ENCODE measurements at regions of chr9 and their contacts with region 1.

Region 1: GRCh38 chr9:21252721-21253547 is 13.1 kb upstream of the IFNA14 start:
- DNase-seq: peak; percentile 35
- ATAC-seq: peak; percentile 84
- H3K4me3 Mint-ChIP-seq: no peak overlapping the region
- H3K27ac Mint-ChIP-seq: no peak overlapping the region
- H3K4me1 Mint-ChIP-seq: peaks cover 4% of the 10 kb centered on the region
- H3K27me3 Mint-ChIP-seq: peaks cover 43% of the 10 kb centered on the region

Region 2: DNA sequence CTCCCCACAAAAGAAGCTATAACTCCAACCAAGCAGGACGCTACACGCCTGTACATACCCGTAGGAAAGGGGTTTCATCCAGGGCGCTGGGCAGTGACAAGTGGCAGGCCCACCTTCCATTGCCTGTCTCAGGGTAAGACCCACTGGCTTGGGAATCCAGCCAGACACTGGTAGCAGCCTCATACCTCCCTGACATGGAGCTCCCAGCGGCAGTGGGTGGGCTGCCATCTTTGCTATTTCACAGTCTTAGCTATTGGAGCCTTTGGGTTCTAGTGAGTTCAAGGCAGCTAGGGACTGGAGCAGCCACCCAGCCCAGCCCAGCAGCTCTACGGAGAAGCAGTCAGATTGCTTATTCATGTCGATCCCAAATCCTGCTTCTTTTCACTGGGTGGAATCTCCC is 42.6 kb before region 1 on chr9:
- CTCF ChIA-PET with region 1: no interaction called
- POLR2A ChIA-PET with region 1: no interaction called
- DNase-seq: no peak
- ATAC-seq: no peak
- H3K4me3 Mint-ChIP-seq: no peak overlapping the region
- H3K27ac Mint-ChIP-seq: no peak overlapping the region
- H3K4me1 Mint-ChIP-seq: peaks cover 3% of the 10 kb centered on the region
- H3K27me3 Mint-ChIP-seq: peaks cover 9% of the 10 kb centered on the region

Region 3: GRCh38 chr9:21234153-21234687 is 18.7 kb before region 1 on chr9:
- CTCF ChIA-PET with region 1: interaction called, 24 read pairs
- POLR2A ChIA-PET with region 1: no interaction called
- DNase-seq: no peak
- ATAC-seq: no peak
- H3K4me3 Mint-ChIP-seq: no peak overlapping the region
- H3K27ac Mint-ChIP-seq: no peak overlapping the region
- H3K4me1 Mint-ChIP-seq: peaks cover 10% of the 10 kb centered on the region
- H3K27me3 Mint-ChIP-seq: peaks cover 13% of the 10 kb centered on the region

Region 4: GRCh38 chr9:21239911-21240310 is 13.0 kb before region 1 on chr9 and contains the start of gene IFNA14:
- CTCF ChIA-PET with region 1: interaction called, 24 read pairs
- POLR2A ChIA-PET with region 1: no interaction called
- DNase-seq: no peak
- ATAC-seq: no peak
- H3K4me3 Mint-ChIP-seq: no peak within 1 kb of the TSS
- H3K27ac Mint-ChIP-seq: no peak within 1 kb of the TSS
- H3K4me1 Mint-ChIP-seq: peaks cover 15% of the 10 kb centered on the region
- H3K27me3 Mint-ChIP-seq: peaks cover 30% of the 10 kb centered on the region
- total RNA-seq, gene IFNA14: not detected

Region 5: DNA sequence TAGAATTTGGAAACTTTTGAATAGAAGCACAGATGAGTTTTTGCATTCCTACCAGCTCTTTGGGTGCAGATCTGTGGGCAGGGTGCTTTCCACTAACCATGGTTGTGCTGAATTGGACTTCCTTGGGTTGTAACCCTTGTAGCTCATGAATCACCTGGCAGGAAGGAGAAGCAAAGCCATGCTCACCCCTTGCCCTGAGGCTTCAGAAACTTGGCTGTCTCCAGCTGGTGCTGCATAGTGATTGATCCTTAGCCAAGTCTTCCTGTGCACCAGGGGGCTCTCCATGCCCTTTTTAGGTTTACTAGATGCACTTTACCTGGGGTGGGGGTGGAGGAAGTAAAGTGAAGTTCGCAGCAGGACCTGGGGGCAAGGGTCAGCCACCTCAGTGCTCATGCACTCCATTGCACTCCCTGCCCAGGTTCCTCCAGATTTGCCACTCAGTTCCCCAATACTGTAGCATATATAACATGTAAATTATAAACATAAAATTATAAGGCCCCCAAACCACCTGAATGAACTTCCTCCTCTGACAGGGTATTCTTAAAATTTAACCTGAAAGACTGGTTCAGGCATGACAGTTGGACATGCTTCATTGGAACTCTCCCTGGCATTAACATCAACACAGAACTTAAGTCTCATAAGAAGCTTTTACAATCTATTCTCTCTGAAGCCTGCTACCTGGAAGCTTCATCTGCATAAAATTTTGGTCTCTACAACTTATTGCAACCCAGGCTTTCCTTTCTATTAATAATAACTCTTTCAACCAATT is 12.7 kb after region 1 on chr9:
- CTCF ChIA-PET with region 1: interaction called, 21 read pairs
- POLR2A ChIA-PET with region 1: no interaction called
- DNase-seq: no peak
- ATAC-seq: no peak
- H3K4me3 Mint-ChIP-seq: no peak overlapping the region
- H3K27ac Mint-ChIP-seq: no peak overlapping the region
- H3K4me1 Mint-ChIP-seq: no peaks in the 10 kb centered on the region
- H3K27me3 Mint-ChIP-seq: peaks cover 48% of the 10 kb centered on the region

Region 6: DNA sequence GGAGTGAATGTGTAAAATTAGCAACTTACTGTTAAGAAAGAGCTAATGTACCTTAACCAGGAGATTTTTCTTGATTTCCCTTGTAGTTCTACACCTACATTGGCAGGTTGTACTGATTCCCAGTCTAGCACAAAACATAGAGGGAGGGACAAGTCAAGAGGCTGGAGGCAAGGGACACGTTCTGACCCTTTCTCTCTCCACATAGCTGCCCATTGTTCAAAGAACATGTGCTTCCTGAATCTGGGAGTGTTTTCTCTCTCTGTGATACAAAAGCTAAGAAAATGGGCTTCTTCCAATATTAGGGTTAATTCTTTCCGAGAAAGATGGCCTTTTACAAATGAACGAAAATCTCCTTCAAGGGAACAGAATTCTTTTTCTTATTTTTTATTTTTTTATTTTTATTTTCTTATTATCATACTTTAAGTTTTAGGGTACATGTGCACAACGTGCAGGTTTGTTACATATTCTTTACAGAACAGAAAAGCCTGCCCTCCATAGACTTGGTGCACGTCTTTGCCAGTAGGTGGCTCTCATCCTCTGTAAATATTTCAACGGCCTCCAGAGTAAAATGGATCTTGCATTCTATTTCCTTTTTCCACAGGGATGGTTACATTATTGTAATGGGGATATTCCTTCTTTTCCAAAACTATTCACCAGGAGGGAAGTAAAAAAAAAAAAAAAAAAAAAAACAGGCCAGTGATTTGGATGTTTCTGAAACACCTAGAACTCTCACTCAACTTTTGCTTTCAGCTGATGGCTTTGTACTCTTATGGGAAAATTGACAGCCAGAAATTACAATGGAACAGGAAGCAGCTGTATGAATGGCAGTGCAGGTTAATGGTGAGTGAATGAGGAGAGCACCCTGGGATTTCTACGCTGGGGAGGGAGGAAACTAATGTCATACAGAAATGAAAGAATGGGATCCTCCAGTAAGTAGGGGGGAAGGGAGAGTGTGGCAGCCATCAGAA is 65.3 kb after region 1 on chr9:
- CTCF ChIA-PET with region 1: interaction called, 12 read pairs
- POLR2A ChIA-PET with region 1: no interaction called
- DNase-seq: peak; percentile 57
- ATAC-seq: peak; percentile 74
- H3K4me3 Mint-ChIP-seq: no peak overlapping the region
- H3K27ac Mint-ChIP-seq: no peak overlapping the region
- H3K4me1 Mint-ChIP-seq: peaks cover 1% of the 10 kb centered on the region
- H3K27me3 Mint-ChIP-seq: no peaks in the 10 kb centered on the region

Region 7: GRCh38 chr9:21326526-21327139 is 73.7 kb after region 1 on chr9:
- CTCF ChIA-PET with region 1: interaction called, 12 read pairs
- POLR2A ChIA-PET with region 1: no interaction called
- DNase-seq: no peak
- ATAC-seq: peak; percentile 80
- H3K4me3 Mint-ChIP-seq: no peak overlapping the region
- H3K27ac Mint-ChIP-seq: no peak overlapping the region
- H3K4me1 Mint-ChIP-seq: peaks cover 37% of the 10 kb centered on the region
- H3K27me3 Mint-ChIP-seq: no peaks in the 10 kb centered on the region

Region 8: DNA sequence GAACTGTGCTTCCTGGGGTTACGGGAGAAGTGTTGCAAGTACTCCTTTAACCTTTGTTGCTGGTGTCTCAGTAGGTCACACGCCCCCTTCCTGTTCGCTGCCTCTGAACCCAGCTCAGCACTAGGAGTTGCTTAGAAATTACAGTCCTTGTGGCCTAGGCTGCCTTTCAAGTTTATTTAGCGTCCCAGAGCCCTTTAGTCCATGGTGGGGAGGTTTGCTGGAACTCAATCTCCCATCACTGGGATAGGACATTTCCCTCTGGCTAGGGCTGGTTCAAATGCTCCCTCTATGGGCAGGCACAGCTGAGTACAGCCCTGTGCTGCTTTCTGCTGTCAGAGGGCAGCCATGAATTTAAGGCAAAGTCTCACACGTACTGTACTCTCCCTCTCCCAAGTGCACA is 160.7 kb after region 1 on chr9:
- CTCF ChIA-PET with region 1: no interaction called
- POLR2A ChIA-PET with region 1: no interaction called
- DNase-seq: no peak
- ATAC-seq: peak; percentile 47
- H3K4me3 Mint-ChIP-seq: no peak overlapping the region
- H3K27ac Mint-ChIP-seq: no peak overlapping the region
- H3K4me1 Mint-ChIP-seq: peaks cover 5% of the 10 kb centered on the region
- H3K27me3 Mint-ChIP-seq: peaks cover 21% of the 10 kb centered on the region

Measured in activated CD8-positive, alpha-beta T cell treated with anti-CD3 and anti-CD28 coated beads, Interleukin-2, amount 10 ng/mL, durations not matched to agents 7 days and 5 days (primary cell).